ENCODE measurements at regions of chr16 and their contacts with region 1.

Region 1: GRCh38 chr16:75774197-75774596 is 47.9 kb upstream of the CPHXL start:
- DNase-seq: no peak
- H3K4me3 ChIP-seq: no peak overlapping the region
- H3K27ac ChIP-seq: no peak overlapping the region
- H3K4me1 ChIP-seq: no peaks in the 10 kb centered on the region
- H3K27me3 ChIP-seq: no peaks in the 10 kb centered on the region
- CTCF ChIP-seq: no peak

Region 2: DNA sequence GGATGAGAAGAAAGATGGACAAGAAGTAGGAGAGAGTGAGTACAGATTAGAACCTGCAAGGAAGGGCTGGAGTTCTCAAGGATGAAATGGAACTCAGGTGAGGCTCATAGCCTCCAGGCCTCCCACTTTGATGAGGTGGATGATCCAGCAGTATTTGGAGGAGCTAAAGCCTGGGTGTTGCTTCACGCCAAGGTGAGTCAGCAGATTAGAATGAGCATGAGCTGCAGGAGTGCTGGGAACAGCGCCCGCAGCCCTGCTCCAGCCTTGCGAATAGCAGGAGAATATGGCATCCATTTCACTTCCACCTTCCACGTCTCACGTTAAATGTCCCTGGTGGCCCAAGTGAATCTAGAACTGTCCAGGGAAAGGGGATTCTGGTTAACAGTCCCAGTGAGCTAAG is 46.5 kb after region 1 on chr16:
- intact Hi-C with region 1: loop called (anchors 1 kb)
- DNase-seq: no peak
- H3K4me3 ChIP-seq: no peak overlapping the region
- H3K27ac ChIP-seq: no peak overlapping the region
- H3K4me1 ChIP-seq: no peaks in the 10 kb centered on the region
- H3K27me3 ChIP-seq: no peaks in the 10 kb centered on the region
- CTCF ChIP-seq: no peak

Region 3: GRCh38 chr16:75860326-75861053 is 86.3 kb after region 1 on chr16:
- intact Hi-C with region 1: no loop called
- DNase-seq: no peak
- H3K4me3 ChIP-seq: no peak overlapping the region
- H3K27ac ChIP-seq: no peak overlapping the region
- H3K4me1 ChIP-seq: no peaks in the 10 kb centered on the region
- H3K27me3 ChIP-seq: no peaks in the 10 kb centered on the region
- CTCF ChIP-seq: no peak

Region 4: GRCh38 chr16:75947626-75948239 is 173.5 kb after region 1 on chr16:
- intact Hi-C with region 1: no loop called
- DNase-seq: no peak
- H3K4me3 ChIP-seq: no peak overlapping the region
- H3K27ac ChIP-seq: no peak overlapping the region
- H3K4me1 ChIP-seq: no peaks in the 10 kb centered on the region
- H3K27me3 ChIP-seq: no peaks in the 10 kb centered on the region
- CTCF ChIP-seq: no peak

Region 5: GRCh38 chr16:75996521-75996920 is 222.3 kb after region 1 on chr16:
- intact Hi-C with region 1: no loop called
- DNase-seq: no peak
- H3K4me3 ChIP-seq: no peak overlapping the region
- H3K27ac ChIP-seq: no peak overlapping the region
- H3K4me1 ChIP-seq: no peaks in the 10 kb centered on the region
- H3K27me3 ChIP-seq: no peaks in the 10 kb centered on the region
- CTCF ChIP-seq: no peak